ENCODE measurements at regions of chr12 and their contacts with region 1.

Region 1: GRCh38 chr12:26097046-26097878 is 27.6 kb downstream of the BHLHE41 start:
- DNase-seq: peak; percentile 16 to 73 (median 55)
- ATAC-seq: peak; percentile 81
- H3K4me3 ChIP-seq: no peak overlapping the region
- H3K4me3 Mint-ChIP-seq: no peak overlapping the region
- H3K27ac ChIP-seq: no peak overlapping the region
- H3K27ac Mint-ChIP-seq: no peak overlapping the region
- H3K4me1 ChIP-seq: no peaks in the 10 kb centered on the region
- H3K4me1 Mint-ChIP-seq: no peaks in the 10 kb centered on the region
- H3K27me3 ChIP-seq: no peaks in the 10 kb centered on the region
- H3K27me3 Mint-ChIP-seq: peaks cover 7% of the 10 kb centered on the region
- CTCF ChIP-seq: peak; percentile 90

Region 2: GRCh38 chr12:26416550-26416949 is 319.3 kb after region 1 on chr12:
- CTCF ChIA-PET with region 1: no interaction called
- POLR2A ChIA-PET with region 1: no interaction called
- intact Hi-C with region 1: loop called in 1 of 2 experiments (anchors 5 kb)
- DNase-seq: no peak
- ATAC-seq: no peak
- H3K4me3 ChIP-seq: no peak overlapping the region
- H3K4me3 Mint-ChIP-seq: no peak overlapping the region
- H3K27ac ChIP-seq: no peak overlapping the region
- H3K27ac Mint-ChIP-seq: no peak overlapping the region
- H3K4me1 ChIP-seq: no peaks in the 10 kb centered on the region
- H3K4me1 Mint-ChIP-seq: no peaks in the 10 kb centered on the region
- H3K27me3 ChIP-seq: no peaks in the 10 kb centered on the region
- H3K27me3 Mint-ChIP-seq: no peaks in the 10 kb centered on the region
- CTCF ChIP-seq: no peak

Region 3: GRCh38 chr12:26651566-26652188 is 554.4 kb after region 1 on chr12:
- CTCF ChIA-PET with region 1: interaction called, 7 read pairs
- POLR2A ChIA-PET with region 1: no interaction called
- intact Hi-C with region 1: loop called in 1 of 2 experiments (anchors 5 kb)
- DNase-seq: peak in 3 of 9 experiments; percentile 10 to 35 (median 28)
- ATAC-seq: no peak
- H3K4me3 ChIP-seq: no peak overlapping the region
- H3K4me3 Mint-ChIP-seq: no peak overlapping the region
- H3K27ac ChIP-seq: no peak overlapping the region
- H3K27ac Mint-ChIP-seq: no peak overlapping the region
- H3K4me1 ChIP-seq: no peaks in the 10 kb centered on the region
- H3K4me1 Mint-ChIP-seq: no peaks in the 10 kb centered on the region
- H3K27me3 ChIP-seq: no peaks in the 10 kb centered on the region
- H3K27me3 Mint-ChIP-seq: no peaks in the 10 kb centered on the region
- CTCF ChIP-seq: peak; percentile 52

Region 4: GRCh38 chr12:26701604-26702215 is 604.4 kb after region 1 on chr12:
- CTCF ChIA-PET with region 1: interaction called, 11 read pairs
- POLR2A ChIA-PET with region 1: no interaction called
- intact Hi-C with region 1: loop called (anchors 1 to 2 kb)
- DNase-seq: peak in 2 of 9 experiments; percentile 31 to 44
- ATAC-seq: no peak
- H3K4me3 ChIP-seq: no peak overlapping the region
- H3K4me3 Mint-ChIP-seq: no peak overlapping the region
- H3K27ac ChIP-seq: no peak overlapping the region
- H3K27ac Mint-ChIP-seq: no peak overlapping the region
- H3K4me1 ChIP-seq: no peaks in the 10 kb centered on the region
- H3K4me1 Mint-ChIP-seq: no peaks in the 10 kb centered on the region
- H3K27me3 ChIP-seq: no peaks in the 10 kb centered on the region
- H3K27me3 Mint-ChIP-seq: no peaks in the 10 kb centered on the region
- CTCF ChIP-seq: peak; percentile 32

Region 5: DNA sequence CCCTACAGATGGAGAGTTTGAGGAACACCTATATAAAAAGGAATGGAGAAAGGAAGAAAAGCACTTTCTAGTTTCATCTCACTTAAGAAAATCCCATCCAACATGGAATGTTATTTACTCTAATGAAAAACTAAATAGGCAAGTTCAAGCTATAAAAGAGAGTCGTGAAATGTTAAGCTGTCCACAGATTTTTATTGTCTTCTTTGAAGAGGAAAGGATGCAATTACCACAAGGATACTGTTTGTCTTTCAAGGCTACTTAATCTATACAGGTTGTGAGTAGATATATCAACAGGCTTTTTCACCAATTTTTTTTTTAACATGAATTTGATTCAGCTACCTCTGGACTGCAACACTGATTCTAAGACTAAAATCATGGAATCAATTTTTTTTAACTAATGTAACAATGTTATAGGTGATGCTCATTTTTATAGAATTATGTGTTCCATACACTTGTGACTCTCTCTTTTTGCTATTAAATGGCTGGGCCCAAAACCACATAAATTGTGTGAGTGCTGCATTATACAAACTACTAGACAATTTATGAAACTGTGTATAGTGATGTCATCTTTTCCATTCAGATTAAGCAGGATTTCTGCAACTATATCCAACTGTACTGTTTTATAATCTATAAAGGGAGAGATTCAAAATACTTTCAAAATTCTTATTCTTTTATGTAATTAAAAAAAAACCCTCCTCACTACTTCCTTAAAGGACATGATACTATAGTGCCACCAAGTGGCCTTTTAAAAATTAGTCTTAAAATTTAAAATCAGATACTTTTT is 1208.6 kb after region 1 on chr12:
- CTCF ChIA-PET with region 1: no interaction called
- POLR2A ChIA-PET with region 1: no interaction called
- intact Hi-C with region 1: loop called in 1 of 2 experiments (anchors 1 kb)
- DNase-seq: peak in 2 of 9 experiments; percentile 46 to 62
- ATAC-seq: peak; percentile 34
- H3K4me3 ChIP-seq: no peak overlapping the region
- H3K4me3 Mint-ChIP-seq: no peak overlapping the region
- H3K27ac ChIP-seq: no peak overlapping the region
- H3K27ac Mint-ChIP-seq: no peak overlapping the region
- H3K4me1 ChIP-seq: no peaks in the 10 kb centered on the region
- H3K4me1 Mint-ChIP-seq: no peaks in the 10 kb centered on the region
- H3K27me3 ChIP-seq: no peaks in the 10 kb centered on the region
- H3K27me3 Mint-ChIP-seq: no peaks in the 10 kb centered on the region
- CTCF ChIP-seq: peak; percentile 89

Region 6: DNA sequence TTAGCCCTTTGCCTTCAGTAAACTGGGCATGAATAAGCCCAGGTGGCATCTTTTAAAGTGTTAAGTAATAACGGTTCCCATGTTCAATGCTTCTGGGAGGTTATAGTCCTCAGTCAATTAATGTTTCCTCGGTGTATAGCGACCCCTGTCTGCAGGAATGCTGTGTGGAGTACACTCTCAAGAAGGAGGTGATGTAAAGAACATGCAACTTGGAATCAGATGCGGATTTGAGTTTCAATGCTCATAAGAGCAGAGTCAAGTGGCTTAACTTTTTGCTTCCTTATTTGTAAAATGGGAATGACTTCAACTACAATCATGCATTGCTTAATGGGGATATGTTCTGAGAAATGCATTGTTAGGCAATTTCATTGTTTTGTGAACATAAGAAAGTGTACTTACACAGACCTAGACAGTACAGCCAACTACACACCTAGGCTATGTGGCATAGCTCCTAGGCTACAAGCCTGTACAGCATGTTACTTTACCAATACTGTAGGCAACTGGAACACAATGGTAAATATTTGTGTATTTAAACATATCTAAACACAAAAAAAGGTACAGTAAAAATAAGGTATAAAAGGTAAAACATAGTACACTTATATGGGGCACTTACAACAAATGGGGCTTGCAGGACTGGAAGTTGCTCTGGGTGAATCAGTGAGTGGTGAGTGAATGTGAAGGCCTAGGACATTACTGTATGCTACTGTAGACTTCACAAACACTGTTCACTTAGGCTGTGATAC is 1606.6 kb after region 1 on chr12:
- CTCF ChIA-PET with region 1: no interaction called
- POLR2A ChIA-PET with region 1: no interaction called
- intact Hi-C with region 1: loop called in 1 of 2 experiments (anchors 10 kb)
- DNase-seq: peak; percentile 32 to 77 (median 64)
- ATAC-seq: peak; percentile 98
- H3K4me3 ChIP-seq: no peak overlapping the region
- H3K4me3 Mint-ChIP-seq: no peak overlapping the region
- H3K27ac ChIP-seq: no peak overlapping the region
- H3K27ac Mint-ChIP-seq: no peak overlapping the region
- H3K4me1 ChIP-seq: no peaks in the 10 kb centered on the region
- H3K4me1 Mint-ChIP-seq: no peaks in the 10 kb centered on the region
- H3K27me3 ChIP-seq: no peaks in the 10 kb centered on the region
- H3K27me3 Mint-ChIP-seq: peaks cover 6% of the 10 kb centered on the region
- CTCF ChIP-seq: peak; percentile 74